ENCODE measurements at regions of chr12 and their contacts with region 1.

Region 1: DNA sequence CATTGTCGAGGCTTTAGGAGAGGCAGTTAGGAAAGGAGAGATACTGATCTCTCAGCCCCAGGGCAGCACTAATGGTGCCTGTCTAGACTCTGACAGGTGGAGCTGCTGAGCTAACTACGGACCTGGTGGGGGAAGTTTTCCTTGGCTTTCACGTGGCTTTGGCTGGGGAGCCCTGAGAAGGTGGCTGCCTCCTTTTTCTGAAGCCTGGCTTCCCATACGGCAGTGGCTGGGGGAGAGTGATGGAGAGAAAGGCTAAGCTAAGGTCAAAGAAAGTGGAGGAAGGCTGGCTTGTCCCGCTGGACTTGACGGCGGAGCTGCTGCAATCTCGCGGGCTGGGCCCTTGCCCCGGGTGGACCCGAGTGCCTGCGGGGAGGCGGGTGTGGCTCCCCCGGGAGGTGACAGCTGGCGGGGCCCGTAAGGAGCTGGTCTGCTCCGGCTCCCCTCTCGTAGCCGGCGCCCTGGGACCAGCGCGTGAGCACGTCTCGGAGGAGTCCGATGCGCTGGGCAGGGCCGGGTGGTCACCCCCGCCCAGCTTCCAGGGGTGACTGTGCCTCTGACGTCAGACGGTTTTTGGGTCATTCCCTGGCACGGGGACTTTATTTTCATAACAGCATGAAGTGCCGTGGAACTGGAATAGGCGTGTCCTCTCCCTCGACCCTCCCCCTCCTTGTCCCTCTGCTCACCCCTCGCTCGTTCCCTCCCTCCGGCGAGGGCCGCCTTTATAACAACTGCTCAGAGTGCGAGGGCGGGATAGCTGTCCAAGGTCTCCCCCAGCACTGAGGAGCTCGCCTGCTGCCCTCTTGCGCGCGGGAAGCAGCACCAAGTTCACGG is at the start of gene GPRC5A:
- DNase-seq: peak; percentile 93
- ATAC-seq: peak; percentile 83
- H3K4me3 ChIP-seq: peak within 1 kb of the TSS; percentile 61 to 86
- H3K27ac ChIP-seq: peak within 1 kb of the TSS; percentile 96
- H3K4me1 ChIP-seq: peaks cover 33% of the 10 kb centered on the region
- H3K27me3 ChIP-seq: no peaks in the 10 kb centered on the region
- CTCF ChIP-seq: no peak; the same call in 1 of the 2 replicates
- total RNA-seq, gene GPRC5A: 648 TPM

Region 2: DNA sequence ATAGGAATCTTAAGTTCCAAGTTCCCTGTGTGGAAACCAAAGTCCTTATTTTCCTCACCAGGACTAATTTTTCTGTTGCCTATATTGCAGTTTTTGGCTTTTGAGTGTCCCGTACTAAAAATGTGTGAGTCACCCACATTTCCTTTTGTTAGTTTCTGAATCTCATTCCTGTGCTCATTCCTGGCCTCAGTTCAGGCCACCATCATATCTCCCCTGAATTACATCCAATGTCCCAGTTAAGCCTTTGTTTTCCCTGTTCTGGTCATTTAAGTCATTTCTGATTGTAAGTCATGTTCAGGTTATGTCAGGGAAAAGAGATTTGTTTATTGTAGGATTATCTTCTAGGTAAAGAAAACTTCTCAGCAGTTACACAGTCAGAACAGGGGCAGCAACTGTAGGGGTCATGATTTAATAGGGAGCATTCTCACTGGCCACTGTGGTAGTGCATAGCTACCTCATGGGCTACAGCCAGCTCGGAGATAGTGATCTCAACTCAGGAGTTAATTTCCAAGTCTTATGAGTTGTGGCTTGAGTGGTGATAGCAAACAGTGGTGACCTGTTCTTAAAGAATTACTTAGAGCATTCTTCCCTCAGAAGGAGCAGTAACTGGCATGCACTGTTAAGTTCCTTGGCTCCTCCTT is 71.2 kb before region 1 on chr12:
- CTCF ChIA-PET with region 1: no interaction called
- POLR2A ChIA-PET with region 1: interaction called, 10 read pairs
- in situ Hi-C with region 1: no loop called
- intact Hi-C with region 1: loop called (anchors 5 kb)
- DNase-seq: no peak
- ATAC-seq: peak; percentile 95
- H3K4me3 ChIP-seq: no peak overlapping the region; a peak in 1 of 4 replicates
- H3K27ac ChIP-seq: peak overlapping the region; percentile 99
- H3K4me1 ChIP-seq: peaks cover 84% of the 10 kb centered on the region
- H3K27me3 ChIP-seq: no peaks in the 10 kb centered on the region
- CTCF ChIP-seq: no peak

Region 3: GRCh38 chr12:12837025-12837872 is 53.8 kb before region 1 on chr12:
- CTCF ChIA-PET with region 1: interaction called, 12 read pairs
- POLR2A ChIA-PET with region 1: interaction called, 18 read pairs
- in situ Hi-C with region 1: no loop called
- intact Hi-C with region 1: loop called (anchors 1 kb)
- DNase-seq: peak; percentile 71
- ATAC-seq: peak; percentile 53
- H3K4me3 ChIP-seq: no peak overlapping the region
- H3K27ac ChIP-seq: peak overlapping the region; percentile 93
- H3K4me1 ChIP-seq: peaks cover 62% of the 10 kb centered on the region
- H3K27me3 ChIP-seq: no peaks in the 10 kb centered on the region
- CTCF ChIP-seq: peak; percentile 70; the same call in 1 of the 2 replicates

Region 4: GRCh38 chr12:12872139-12872881 is 18.7 kb before region 1 on chr12:
- CTCF ChIA-PET with region 1: no interaction called
- POLR2A ChIA-PET with region 1: interaction called, 21 read pairs
- in situ Hi-C with region 1: no loop called
- intact Hi-C with region 1: no loop called
- DNase-seq: no peak
- ATAC-seq: peak; percentile 80
- H3K4me3 ChIP-seq: peak overlapping the region in 1 of 2 experiments; percentile 9; a peak in 1 of 4 replicates
- H3K27ac ChIP-seq: peak overlapping the region; percentile 89
- H3K4me1 ChIP-seq: peaks cover 61% of the 10 kb centered on the region
- H3K27me3 ChIP-seq: no peaks in the 10 kb centered on the region
- CTCF ChIP-seq: no peak

Region 5: DNA sequence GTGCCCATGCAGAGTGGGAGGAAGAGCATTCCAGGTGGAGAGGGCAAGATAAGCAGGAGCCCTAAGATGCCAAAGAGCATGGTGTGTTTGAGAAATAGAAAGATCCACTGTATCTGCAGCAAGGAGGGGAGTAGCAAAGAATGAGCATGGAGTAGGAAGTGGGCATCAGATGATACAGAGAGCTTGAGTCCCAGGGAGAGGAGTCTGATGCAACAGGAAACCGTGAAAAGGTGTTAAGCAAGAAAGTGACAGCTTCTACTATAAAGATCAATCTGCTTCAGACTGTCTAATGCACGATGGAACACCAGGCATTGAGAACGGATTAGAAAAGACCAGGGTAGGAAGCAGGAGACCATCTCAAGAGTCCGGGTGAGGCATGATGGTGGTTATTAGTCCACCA is 73.2 kb after region 1 on chr12:
- CTCF ChIA-PET with region 1: no interaction called
- POLR2A ChIA-PET with region 1: no interaction called
- in situ Hi-C with region 1: no loop called
- intact Hi-C with region 1: no loop called
- DNase-seq: no peak
- ATAC-seq: no peak
- H3K4me3 ChIP-seq: no peak overlapping the region
- H3K27ac ChIP-seq: no peak overlapping the region
- H3K4me1 ChIP-seq: no peaks in the 10 kb centered on the region
- H3K27me3 ChIP-seq: no peaks in the 10 kb centered on the region
- CTCF ChIP-seq: no peak

Measured in Panc1 (cell line).